HepG2 (cell line): ENCODE measurements at regions of chr3 and their contacts with region 1.

Region 1: DNA sequence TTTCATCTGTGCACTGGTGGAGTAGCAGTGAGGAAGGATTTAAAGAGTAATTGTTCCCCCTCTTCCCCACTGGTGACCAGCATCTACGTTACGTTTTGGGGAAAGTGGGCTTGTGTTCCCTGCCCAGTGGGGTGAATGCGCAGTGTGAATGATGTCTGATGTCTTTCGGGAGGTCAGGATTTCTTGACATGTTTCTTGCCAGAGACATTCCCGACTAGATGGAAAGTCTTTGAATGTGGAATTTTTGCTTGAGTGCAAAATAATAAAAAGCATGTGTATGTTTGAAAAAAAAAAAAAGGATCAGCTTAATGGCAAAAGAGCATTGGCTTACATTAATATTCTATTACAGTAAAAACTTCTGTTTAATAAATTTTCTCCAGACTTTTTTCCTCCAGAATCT is 632.2 kb downstream of the FOXP1 start:
- DNase-seq: no peak
- ATAC-seq: no peak
- H3K4me3 ChIP-seq: no peak overlapping the region
- H3K27ac ChIP-seq: no peak overlapping the region
- H3K4me1 ChIP-seq: no peaks in the 10 kb centered on the region
- H3K27me3 ChIP-seq: no peaks in the 10 kb centered on the region
- CTCF ChIP-seq: no peak
- EP300 ChIP-seq: no peak
- POLR2A ChIP-seq: no peak
- RAD21 ChIP-seq: no peak

Region 2: GRCh38 chr3:70905491-70905890 is 45.8 kb before region 1 on chr3:
- CTCF ChIA-PET with region 1: no interaction called
- POLR2A ChIA-PET with region 1: no interaction called
- in situ Hi-C with region 1: no loop called
- intact Hi-C with region 1: loop called (anchors 1 kb)
- DNase-seq: no peak
- ATAC-seq: no peak
- H3K4me3 ChIP-seq: no peak overlapping the region
- H3K27ac ChIP-seq: no peak overlapping the region
- H3K4me1 ChIP-seq: no peaks in the 10 kb centered on the region
- H3K27me3 ChIP-seq: peaks cover 0 to 4% of the 10 kb centered on the region in 2 experiments; a peak in 2 of 5 replicates
- CTCF ChIP-seq: no peak
- EP300 ChIP-seq: no peak
- POLR2A ChIP-seq: no peak
- RAD21 ChIP-seq: no peak

Region 3: DNA sequence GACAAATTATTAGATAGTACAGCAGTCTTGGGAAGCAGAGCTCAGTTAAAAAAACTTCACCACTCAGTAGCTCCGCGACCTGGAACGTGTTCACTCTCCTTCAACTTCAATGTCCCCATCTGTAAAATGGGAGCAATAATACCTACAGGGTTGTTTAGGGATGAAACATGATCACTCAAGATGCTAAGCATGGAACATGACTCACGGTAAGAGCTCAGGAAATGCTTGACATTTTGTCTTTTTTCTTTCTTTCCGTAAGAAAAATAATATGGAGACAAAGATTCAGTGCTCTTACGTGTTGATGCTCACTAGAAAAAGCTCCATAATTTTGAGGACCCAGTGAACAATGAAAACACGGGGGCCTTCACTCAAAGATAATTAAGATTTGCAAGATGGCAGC is 32.2 kb before region 1 on chr3:
- CTCF ChIA-PET with region 1: no interaction called
- POLR2A ChIA-PET with region 1: no interaction called
- in situ Hi-C with region 1: no loop called
- intact Hi-C with region 1: no loop called
- DNase-seq: no peak
- ATAC-seq: no peak
- H3K4me3 ChIP-seq: no peak overlapping the region
- H3K27ac ChIP-seq: no peak overlapping the region
- H3K4me1 ChIP-seq: peaks cover 17% of the 10 kb centered on the region
- H3K27me3 ChIP-seq: peaks cover 0 to 4% of the 10 kb centered on the region in 2 experiments; a peak in 1 of 5 replicates
- CTCF ChIP-seq: no peak
- EP300 ChIP-seq: no peak
- POLR2A ChIP-seq: no peak
- RAD21 ChIP-seq: no peak

Region 4: GRCh38 chr3:71006810-71007785 is 55.8 kb after region 1 on chr3:
- CTCF ChIA-PET with region 1: no interaction called
- POLR2A ChIA-PET with region 1: no interaction called
- in situ Hi-C with region 1: no loop called
- intact Hi-C with region 1: no loop called
- DNase-seq: peak; percentile 20
- ATAC-seq: peak; percentile 75
- H3K4me3 ChIP-seq: no peak overlapping the region
- H3K27ac ChIP-seq: no peak overlapping the region
- H3K4me1 ChIP-seq: peaks cover 49% of the 10 kb centered on the region
- H3K27me3 ChIP-seq: no peaks in the 10 kb centered on the region
- CTCF ChIP-seq: peak; percentile 53
- EP300 ChIP-seq: no peak
- POLR2A ChIP-seq: no peak
- RAD21 ChIP-seq: peak; percentile 33; the same call in 1 of the 2 replicates